A673 (cell line): ENCODE measurements at regions of chr1 and their contacts with region 1.

Region 1: GRCh38 chr1:45521398-45522323 is at the start of gene PRDX1:
- DNase-seq: peak; percentile 98
- H3K4me3 ChIP-seq: peak within 1 kb of the TSS; percentile 91
- H3K27ac ChIP-seq: peak within 1 kb of the TSS; percentile 91
- H3K4me1 ChIP-seq: peaks cover 26% of the 10 kb centered on the region
- H3K27me3 ChIP-seq: no peaks in the 10 kb centered on the region
- CTCF ChIP-seq: no peak
- total RNA-seq, gene PRDX1: 947 and 1,108 TPM in 2 replicates

Region 2: GRCh38 chr1:45365051-45365450 is 156.6 kb before region 1 on chr1:
- CTCF ChIA-PET with region 1: no interaction called
- POLR2A ChIA-PET with region 1: no interaction called
- intact Hi-C with region 1: no loop called
- DNase-seq: no peak
- H3K4me3 ChIP-seq: no peak overlapping the region
- H3K27ac ChIP-seq: no peak overlapping the region
- H3K4me1 ChIP-seq: no peaks in the 10 kb centered on the region
- H3K27me3 ChIP-seq: no peaks in the 10 kb centered on the region
- CTCF ChIP-seq: no peak

Region 3: GRCh38 chr1:45499415-45499769 is 22.3 kb before region 1 on chr1:
- CTCF ChIA-PET with region 1: no interaction called
- POLR2A ChIA-PET with region 1: interaction called, 17 read pairs
- intact Hi-C with region 1: no loop called
- DNase-seq: no peak
- H3K4me3 ChIP-seq: peak overlapping the region; percentile 59
- H3K27ac ChIP-seq: no peak overlapping the region
- H3K4me1 ChIP-seq: peaks cover 3% of the 10 kb centered on the region
- H3K27me3 ChIP-seq: no peaks in the 10 kb centered on the region
- CTCF ChIP-seq: no peak

Region 4: DNA sequence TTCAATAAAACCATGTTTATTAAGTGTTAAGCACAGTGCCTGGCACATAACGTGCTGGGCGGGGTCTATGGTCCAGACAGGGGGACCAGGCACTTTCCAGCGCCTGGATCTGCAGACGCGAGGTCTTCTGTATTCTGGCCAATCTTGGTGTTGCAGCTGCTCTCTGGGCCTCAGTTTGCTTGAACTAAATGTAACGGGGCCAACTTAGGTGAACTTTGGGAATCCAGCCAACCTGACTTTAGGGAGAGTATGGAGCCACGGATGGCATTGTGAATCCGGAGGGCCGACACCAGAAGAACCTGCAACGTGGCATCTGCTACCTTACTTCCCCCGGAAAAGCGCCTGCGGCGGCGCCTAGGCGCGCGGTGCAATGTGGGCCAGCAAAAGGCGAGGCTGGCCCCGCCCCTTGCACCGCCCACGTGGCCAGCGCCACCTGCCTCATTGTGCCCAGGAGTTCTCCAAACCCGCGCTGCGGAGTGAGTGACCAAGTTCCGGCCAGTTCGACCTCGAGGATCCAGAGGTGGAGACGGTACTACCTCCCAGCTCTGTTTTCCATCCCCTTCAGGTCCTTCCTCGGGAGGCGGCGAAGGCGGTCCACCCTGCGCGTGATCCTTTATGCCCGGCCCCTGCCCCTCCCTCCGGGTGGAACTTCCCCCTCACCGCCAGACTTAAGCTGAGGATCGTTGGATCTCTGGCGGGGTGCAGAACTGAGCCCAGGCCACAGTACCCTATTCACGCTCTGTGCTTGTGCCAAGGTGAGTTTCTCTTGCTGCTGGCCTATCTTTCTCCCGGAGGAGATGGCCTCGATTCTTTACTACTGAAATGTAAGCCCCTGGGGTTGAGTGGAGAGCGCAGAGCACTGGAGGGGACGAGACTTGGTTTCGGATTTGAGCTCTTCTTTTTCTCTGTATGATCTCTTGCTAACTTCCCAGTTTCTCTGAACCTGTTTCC is 29.0 kb after region 1 on chr1 and contains the start of gene AKR1A1:
- CTCF ChIA-PET with region 1: no interaction called
- POLR2A ChIA-PET with region 1: interaction called, 6 read pairs
- intact Hi-C with region 1: loop called (anchors 2 kb)
- DNase-seq: peak; percentile 94
- H3K4me3 ChIP-seq: peak within 1 kb of the TSS; percentile 69
- H3K27ac ChIP-seq: peak within 1 kb of the TSS; percentile 77
- H3K4me1 ChIP-seq: peaks cover 11% of the 10 kb centered on the region
- H3K27me3 ChIP-seq: no peaks in the 10 kb centered on the region
- CTCF ChIP-seq: no peak
- total RNA-seq, gene AKR1A1: 183 and 189 TPM in 2 replicates

Region 5: DNA sequence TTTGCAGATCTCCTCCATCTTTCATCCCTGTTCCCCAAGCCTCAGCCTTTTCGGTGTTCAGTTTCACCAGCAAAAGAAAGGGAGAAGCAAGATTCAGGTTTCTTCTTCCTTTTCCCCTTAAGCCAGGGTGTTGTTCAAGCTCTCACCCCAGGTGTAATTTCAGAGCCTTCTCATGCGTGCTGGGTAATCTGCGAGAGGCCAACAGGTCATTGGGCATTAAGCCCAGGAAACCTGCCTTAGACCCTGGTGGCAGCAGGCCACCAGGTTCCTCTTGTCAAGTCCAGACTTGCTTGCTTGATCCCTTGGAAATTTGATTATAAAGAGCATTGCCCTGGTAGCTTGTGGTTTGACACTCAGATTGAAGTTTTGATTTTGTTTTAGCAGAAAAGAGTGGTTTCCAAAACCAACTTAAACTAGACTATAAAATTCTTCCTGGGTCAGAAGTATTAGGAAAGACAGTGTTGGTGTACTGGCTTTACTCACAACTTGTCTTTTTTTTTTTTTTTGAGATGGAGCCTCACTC is 35.8 kb after region 1 on chr1:
- CTCF ChIA-PET with region 1: no interaction called
- POLR2A ChIA-PET with region 1: interaction called, 12 read pairs
- intact Hi-C with region 1: no loop called
- DNase-seq: no peak
- H3K4me3 ChIP-seq: no peak overlapping the region
- H3K27ac ChIP-seq: no peak overlapping the region
- H3K4me1 ChIP-seq: peaks cover 2% of the 10 kb centered on the region
- H3K27me3 ChIP-seq: no peaks in the 10 kb centered on the region
- CTCF ChIP-seq: no peak

Region 6: DNA sequence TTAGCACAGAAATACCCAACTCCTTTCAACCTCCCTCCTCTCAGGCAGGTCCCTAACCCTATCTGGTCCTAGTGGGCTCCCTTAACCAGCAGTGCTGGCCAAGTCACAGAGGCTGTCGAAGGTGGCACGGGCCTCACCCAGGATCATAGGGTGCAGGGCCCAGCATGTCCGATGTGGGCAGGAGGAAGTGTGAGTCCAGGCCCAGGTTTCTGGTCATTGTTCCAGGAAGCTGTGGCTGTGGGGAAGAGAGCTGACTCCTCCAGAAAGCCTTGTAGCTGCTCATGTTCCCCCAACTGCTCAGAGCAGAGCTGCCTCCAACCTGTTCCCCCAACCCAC is 99.8 kb after region 1 on chr1:
- CTCF ChIA-PET with region 1: no interaction called
- POLR2A ChIA-PET with region 1: no interaction called
- intact Hi-C with region 1: no loop called
- DNase-seq: no peak
- H3K4me3 ChIP-seq: no peak overlapping the region
- H3K27ac ChIP-seq: no peak overlapping the region
- H3K4me1 ChIP-seq: no peaks in the 10 kb centered on the region
- H3K27me3 ChIP-seq: no peaks in the 10 kb centered on the region
- CTCF ChIP-seq: no peak

Region 7: GRCh38 chr1:45769261-45769932 is 247.7 kb after region 1 on chr1:
- CTCF ChIA-PET with region 1: no interaction called
- POLR2A ChIA-PET with region 1: interaction called, 18 read pairs
- intact Hi-C with region 1: no loop called
- DNase-seq: no peak
- H3K4me3 ChIP-seq: no peak overlapping the region
- H3K27ac ChIP-seq: no peak overlapping the region
- H3K4me1 ChIP-seq: no peaks in the 10 kb centered on the region
- H3K27me3 ChIP-seq: no peaks in the 10 kb centered on the region
- CTCF ChIP-seq: no peak